ENCODE measurements at regions of chr2 and their contacts with region 1.

Region 1: GRCh38 chr2:162123806-162124758 is 28.0 kb downstream of the GCG start:
- DNase-seq: no peak
- ATAC-seq: no peak
- H3K4me3 Mint-ChIP-seq: no peak overlapping the region
- H3K27ac Mint-ChIP-seq: no peak overlapping the region
- H3K4me1 Mint-ChIP-seq: peaks cover 15% of the 10 kb centered on the region
- H3K27me3 Mint-ChIP-seq: no peaks in the 10 kb centered on the region

Region 2: GRCh38 chr2:161308178-161308955 is 815.7 kb before region 1 on chr2 and contains the start of gene PSMD14:
- CTCF ChIA-PET with region 1: no interaction called
- POLR2A ChIA-PET with region 1: no interaction called
- intact Hi-C with region 1: no loop called
- DNase-seq: peak; percentile 96
- ATAC-seq: peak; percentile 91
- H3K4me3 Mint-ChIP-seq: peak within 1 kb of the TSS; percentile 87
- H3K27ac Mint-ChIP-seq: peak within 1 kb of the TSS; percentile 93
- H3K4me1 Mint-ChIP-seq: peaks cover 28% of the 10 kb centered on the region
- H3K27me3 Mint-ChIP-seq: no peaks in the 10 kb centered on the region
- total RNA-seq, gene PSMD14: 69.5 to 85.7 TPM

Region 3: DNA sequence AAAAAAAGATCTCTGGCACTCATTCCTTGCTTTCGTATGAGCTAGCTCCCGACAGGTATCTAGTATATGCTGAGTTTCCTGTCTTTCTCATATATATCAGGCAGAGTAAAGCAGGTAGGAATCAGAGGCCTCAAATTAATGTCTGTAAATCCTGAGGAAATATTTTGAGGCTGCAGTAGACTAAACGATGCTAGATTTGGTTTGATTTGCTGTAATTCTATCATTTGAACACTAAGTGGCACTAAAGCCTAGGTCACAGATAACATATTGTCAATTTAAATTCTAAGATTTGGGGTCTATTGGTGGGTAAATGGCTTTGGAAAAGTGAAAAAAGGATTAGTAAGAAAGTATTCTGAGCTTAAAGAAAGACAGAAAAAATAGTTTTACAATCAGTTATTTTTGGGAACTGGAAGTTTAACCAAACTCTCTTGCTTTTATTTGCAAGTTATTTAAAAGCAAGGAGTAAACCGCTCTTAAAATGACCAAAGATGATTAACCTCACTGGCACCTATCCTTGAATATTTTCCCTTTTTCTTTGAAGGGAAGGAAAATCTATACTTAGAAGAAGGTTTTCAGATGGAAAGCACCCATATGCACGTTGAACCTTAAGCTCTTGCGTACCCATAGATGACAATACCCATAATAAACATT is 537.4 kb before region 1 on chr2:
- CTCF ChIA-PET with region 1: interaction called, 35 read pairs
- POLR2A ChIA-PET with region 1: no interaction called
- intact Hi-C with region 1: loop called (anchors 1 kb)
- DNase-seq: no peak
- ATAC-seq: no peak
- H3K4me3 Mint-ChIP-seq: no peak overlapping the region
- H3K27ac Mint-ChIP-seq: no peak overlapping the region
- H3K4me1 Mint-ChIP-seq: no peaks in the 10 kb centered on the region
- H3K27me3 Mint-ChIP-seq: peaks cover 7% of the 10 kb centered on the region

Region 4: DNA sequence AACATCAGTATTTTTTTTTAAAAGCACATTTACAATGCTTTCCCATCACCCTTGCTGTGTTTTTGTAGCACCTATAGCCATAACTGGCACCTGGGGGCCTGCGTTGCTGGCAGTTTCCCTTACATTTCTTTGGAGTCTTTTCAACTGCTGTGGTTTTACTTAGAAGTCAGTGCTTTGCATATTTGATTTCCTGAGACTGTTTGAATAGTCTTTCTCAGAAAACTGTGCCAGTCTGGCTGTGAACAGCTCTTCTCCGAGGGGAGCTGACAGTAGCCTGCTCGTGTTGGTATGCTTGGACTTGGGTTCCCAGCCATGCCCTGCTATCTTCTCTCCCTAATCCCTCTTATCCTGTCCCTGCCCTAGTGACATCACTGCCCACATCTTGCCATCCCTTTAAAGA is 131.6 kb before region 1 on chr2:
- CTCF ChIA-PET with region 1: interaction called, 6 read pairs
- POLR2A ChIA-PET with region 1: no interaction called
- intact Hi-C with region 1: loop called in 1 of 2 experiments (anchors 5 kb)
- DNase-seq: peak; percentile 72
- ATAC-seq: peak; percentile 87
- H3K4me3 Mint-ChIP-seq: peak overlapping the region; percentile 69
- H3K27ac Mint-ChIP-seq: peak overlapping the region; percentile 92
- H3K4me1 Mint-ChIP-seq: peaks cover 60% of the 10 kb centered on the region
- H3K27me3 Mint-ChIP-seq: no peaks in the 10 kb centered on the region

Region 5: GRCh38 chr2:162058973-162059668 is 65.0 kb before region 1 on chr2:
- CTCF ChIA-PET with region 1: interaction called, 4 read pairs
- POLR2A ChIA-PET with region 1: no interaction called
- intact Hi-C with region 1: loop called (anchors 2 to 5 kb)
- DNase-seq: peak; percentile 54
- ATAC-seq: peak; percentile 78
- H3K4me3 Mint-ChIP-seq: peak overlapping the region; percentile 52
- H3K27ac Mint-ChIP-seq: peak overlapping the region; percentile 85
- H3K4me1 Mint-ChIP-seq: peaks cover 86% of the 10 kb centered on the region
- H3K27me3 Mint-ChIP-seq: no peaks in the 10 kb centered on the region

Region 6: GRCh38 chr2:162138310-162138709 is 14.2 kb after region 1 on chr2:
- CTCF ChIA-PET with region 1: interaction called, 14 read pairs
- POLR2A ChIA-PET with region 1: interaction called, 6 read pairs
- intact Hi-C with region 1: no loop called
- DNase-seq: no peak
- ATAC-seq: no peak
- H3K4me3 Mint-ChIP-seq: no peak overlapping the region
- H3K27ac Mint-ChIP-seq: no peak overlapping the region
- H3K4me1 Mint-ChIP-seq: no peaks in the 10 kb centered on the region
- H3K27me3 Mint-ChIP-seq: peaks cover 11% of the 10 kb centered on the region